ENCODE measurements at regions of chr2 and their contacts with region 1.

Region 1: GRCh38 chr2:98487806-98488651 is 43.4 kb downstream of the INPP4A start:
- DNase-seq: peak in 4 of 5 donors; percentile 30 to 71 (median 50)
- H3K4me3 ChIP-seq: no peak overlapping the region
- H3K4me3 Mint-ChIP-seq: peak overlapping the region in 6 of 7 donors; percentile 5 to 63 (median 26)
- H3K27ac ChIP-seq: no peak overlapping the region
- H3K27ac Mint-ChIP-seq: peak overlapping the region; percentile 1 to 94 (median 82)
- H3K4me1 ChIP-seq: peaks cover 80% of the 10 kb centered on the region
- H3K4me1 Mint-ChIP-seq: peaks cover 90 to 100% (median 98%) of the 10 kb centered on the region in 3 donors
- H3K27me3 ChIP-seq: no peaks in the 10 kb centered on the region
- H3K27me3 Mint-ChIP-seq: no peaks in the 10 kb centered on the region

Region 2: DNA sequence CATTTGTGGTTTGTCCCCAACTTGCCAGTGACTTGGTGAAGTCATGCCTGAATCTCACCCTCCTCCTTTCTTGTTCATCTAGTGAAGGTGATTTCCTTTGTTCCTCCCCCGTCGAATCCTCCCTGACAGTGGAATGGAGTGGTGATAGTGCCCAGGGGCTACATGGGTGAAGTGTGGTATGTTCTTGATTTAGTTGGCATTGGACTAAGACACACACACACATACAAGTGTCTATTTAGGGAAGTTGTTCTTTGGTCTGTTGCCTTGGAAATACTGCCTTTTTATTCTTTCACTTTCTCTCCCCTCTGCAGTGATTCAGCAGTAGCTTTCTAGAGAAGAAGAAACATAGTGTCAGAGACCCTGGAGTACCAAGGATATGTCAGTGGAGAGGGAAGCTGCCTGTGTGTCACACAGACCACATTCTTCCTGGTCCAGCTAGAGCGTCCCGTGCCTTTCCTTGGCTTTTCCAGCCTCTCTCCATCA is 32.5 kb before region 1 on chr2:
- CTCF ChIA-PET with region 1: interaction called, 38 read pairs
- POLR2A ChIA-PET with region 1: no interaction called
- DNase-seq: peak in 3 of 5 donors; percentile 53 to 66 (median 59)
- H3K4me3 ChIP-seq: peak overlapping the region; percentile 15
- H3K4me3 Mint-ChIP-seq: peak overlapping the region; percentile 37 to 85 (median 68)
- H3K27ac ChIP-seq: peak overlapping the region; percentile 64
- H3K27ac Mint-ChIP-seq: peak overlapping the region; percentile 91 to 98 (median 94)
- H3K4me1 ChIP-seq: peaks cover 98% of the 10 kb centered on the region
- H3K4me1 Mint-ChIP-seq: peaks cover 90 to 100% (median 98%) of the 10 kb centered on the region in 3 donors
- H3K27me3 ChIP-seq: no peaks in the 10 kb centered on the region
- H3K27me3 Mint-ChIP-seq: no peaks in the 10 kb centered on the region

Region 3: GRCh38 chr2:98502556-98503335 is 14.7 kb after region 1 on chr2:
- CTCF ChIA-PET with region 1: interaction called, 11 read pairs
- POLR2A ChIA-PET with region 1: interaction called, 6 read pairs
- DNase-seq: no peak
- H3K4me3 ChIP-seq: no peak overlapping the region
- H3K4me3 Mint-ChIP-seq: peak overlapping the region in 2 of 7 donors; percentile 16 to 47
- H3K27ac ChIP-seq: no peak overlapping the region
- H3K27ac Mint-ChIP-seq: peak overlapping the region; percentile 38 to 90 (median 80)
- H3K4me1 ChIP-seq: peaks cover 70% of the 10 kb centered on the region
- H3K4me1 Mint-ChIP-seq: peaks cover 90 to 96% (median 96%) of the 10 kb centered on the region in 3 donors
- H3K27me3 ChIP-seq: no peaks in the 10 kb centered on the region
- H3K27me3 Mint-ChIP-seq: no peaks in the 10 kb centered on the region